ENCODE measurements at regions of chr22 and their contacts with region 1.

Region 1: GRCh38 chr22:42717197-42717928 is 3.3 kb downstream of the A4GALT start:
- DNase-seq: peak; percentile 72
- H3K4me3 ChIP-seq: peak overlapping the region; percentile 83
- H3K27ac ChIP-seq: peak overlapping the region; percentile 97
- H3K4me1 ChIP-seq: peaks cover 83% of the 10 kb centered on the region
- CTCF ChIP-seq: no peak

Region 2: DNA sequence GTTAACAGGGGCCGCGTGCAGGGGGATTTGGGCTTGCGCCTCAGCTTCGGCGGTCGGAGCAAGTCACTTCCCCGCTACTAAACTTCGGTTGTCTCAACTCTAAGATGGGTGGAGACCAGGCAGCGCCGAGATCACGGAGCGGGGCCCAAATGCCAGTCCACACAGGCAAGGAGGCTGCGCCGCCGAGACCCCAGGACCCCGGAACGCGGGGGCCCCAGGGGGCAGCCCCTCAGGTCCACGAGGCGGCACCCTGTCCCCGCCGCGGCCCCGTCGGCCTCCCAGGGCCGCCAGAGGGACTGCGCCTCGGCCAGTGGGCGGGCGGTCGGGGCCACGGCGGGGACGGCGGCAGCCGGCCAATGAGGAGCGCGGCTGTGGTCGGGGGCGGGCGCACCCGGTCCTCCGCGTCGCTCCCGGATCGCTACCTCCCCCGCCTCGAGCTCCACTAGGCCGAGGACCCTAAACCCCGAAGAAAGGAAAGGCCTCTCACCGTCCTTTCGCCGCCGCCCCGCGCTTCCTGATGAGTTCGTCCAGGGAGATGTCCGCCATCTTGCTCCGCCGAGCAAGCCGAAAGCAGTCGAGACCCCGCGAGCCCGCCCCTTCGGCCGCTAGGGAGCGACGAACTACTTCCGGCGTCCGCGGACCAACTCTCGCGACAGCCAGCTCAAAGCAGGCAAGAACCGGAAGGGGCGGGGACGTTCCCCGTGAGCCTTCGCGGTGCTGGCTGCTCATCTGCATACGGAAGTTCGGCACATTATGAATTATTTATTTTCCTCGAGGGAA is 102.9 kb before region 1 on chr22 and contains the start of gene POLDIP3:
- CTCF ChIA-PET with region 1: no interaction called
- POLR2A ChIA-PET with region 1: no interaction called
- intact Hi-C with region 1: loop called (anchors 2 kb)
- DNase-seq: peak; percentile 100
- H3K4me3 ChIP-seq: peak within 1 kb of the TSS; percentile 85
- H3K27ac ChIP-seq: peak within 1 kb of the TSS; percentile 92
- H3K4me1 ChIP-seq: peaks cover 34% of the 10 kb centered on the region
- CTCF ChIP-seq: peak; percentile 46
- total RNA-seq, gene POLDIP3: 52.7 and 70.7 TPM in 2 replicates

Region 3: DNA sequence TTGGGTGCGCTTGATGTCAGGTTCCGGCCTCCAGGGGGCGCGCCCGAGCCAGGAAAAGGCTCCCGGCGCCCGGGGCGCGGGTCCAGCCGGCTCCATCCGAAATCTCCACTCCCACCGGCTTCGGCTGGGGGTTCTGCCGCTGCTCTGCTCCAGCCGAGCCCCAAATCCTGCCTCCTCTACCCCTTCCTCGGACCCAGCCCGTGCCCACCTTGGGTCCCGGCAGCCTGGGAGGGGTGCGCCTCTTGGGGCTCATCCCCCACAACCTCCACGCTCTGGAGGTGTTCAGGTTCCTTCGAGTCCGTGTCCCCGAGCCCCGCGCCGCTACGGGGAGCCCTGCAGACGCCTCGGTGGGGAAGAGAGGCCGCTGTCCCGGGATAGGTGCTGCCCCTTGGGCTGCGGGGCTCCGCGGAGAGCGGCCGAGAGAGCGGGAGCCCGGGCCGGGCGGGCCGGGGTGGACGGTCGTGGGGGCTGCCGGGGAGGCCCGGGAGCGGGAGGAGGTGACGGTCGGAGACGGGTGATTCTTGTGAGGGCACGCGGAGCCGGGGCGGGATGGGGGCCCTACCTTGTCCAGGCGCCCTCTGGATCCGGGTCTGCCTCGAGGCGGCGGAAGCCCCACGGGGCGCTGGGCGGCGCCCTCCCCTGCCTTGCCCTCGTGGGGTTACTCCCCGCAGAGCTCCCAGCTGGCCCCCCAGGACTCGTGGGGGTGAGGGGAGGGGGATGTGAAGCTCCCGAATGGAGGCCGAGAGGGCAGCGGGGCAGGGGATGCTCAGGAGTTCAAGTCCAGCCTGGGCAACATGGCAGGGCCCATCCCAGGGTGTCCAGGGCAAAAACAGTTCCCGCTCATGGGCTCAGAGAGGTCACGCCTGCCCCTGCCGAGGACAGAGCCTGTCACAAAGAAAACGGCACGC is 55.0 kb before region 1 on chr22:
- CTCF ChIA-PET with region 1: no interaction called
- POLR2A ChIA-PET with region 1: interaction called, 4 read pairs
- intact Hi-C with region 1: loop called (anchors 1 kb)
- DNase-seq: peak; percentile 85
- H3K4me3 ChIP-seq: peak overlapping the region; percentile 64
- H3K27ac ChIP-seq: no peak overlapping the region
- H3K4me1 ChIP-seq: peaks cover 49% of the 10 kb centered on the region
- CTCF ChIP-seq: peak; percentile 91

Region 4: DNA sequence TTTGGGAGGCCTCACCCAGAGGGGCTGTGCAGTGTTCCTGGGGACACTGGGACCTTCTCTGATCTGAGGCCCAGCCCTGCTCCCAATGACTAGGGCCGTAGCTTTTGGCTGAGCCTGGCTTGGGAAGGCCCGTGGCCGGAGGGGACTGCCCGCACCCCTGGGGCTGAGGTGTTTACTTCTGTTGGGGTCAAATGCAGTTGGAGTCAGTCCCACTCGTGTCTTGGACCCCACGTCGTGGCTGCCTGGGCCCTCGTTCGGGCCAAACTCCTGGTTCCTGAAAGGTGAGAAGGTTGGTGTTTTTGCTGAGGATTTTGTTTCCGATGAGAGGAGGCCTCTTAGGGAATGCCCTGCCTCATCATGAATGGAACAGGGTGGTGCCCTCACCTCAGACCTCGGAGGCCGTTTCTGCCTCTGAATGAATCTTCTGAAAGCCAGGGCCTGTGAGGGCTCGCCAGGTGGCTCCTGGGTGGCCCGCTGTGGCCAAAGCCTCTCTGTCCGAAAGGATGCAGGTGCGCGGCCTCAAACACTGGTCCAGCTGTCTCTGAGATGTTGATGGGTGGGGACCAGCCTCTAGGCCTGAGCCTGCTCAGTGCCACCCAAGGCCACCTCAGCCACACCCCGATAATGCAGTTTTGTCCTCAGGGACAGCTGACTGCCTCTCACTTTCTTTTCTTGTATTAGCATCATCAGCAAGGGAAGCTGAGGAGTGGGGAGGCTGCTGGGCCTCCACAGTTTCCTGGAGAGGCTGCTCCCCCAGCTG is 43.6 kb after region 1 on chr22:
- CTCF ChIA-PET with region 1: interaction called, 3 read pairs
- POLR2A ChIA-PET with region 1: interaction called, 3 read pairs
- intact Hi-C with region 1: loop called (anchors 1 kb)
- DNase-seq: peak; percentile 95
- H3K4me3 ChIP-seq: peak overlapping the region; percentile 33
- H3K27ac ChIP-seq: peak overlapping the region; percentile 95
- H3K4me1 ChIP-seq: peaks cover 72% of the 10 kb centered on the region
- CTCF ChIP-seq: no peak

Region 5: DNA sequence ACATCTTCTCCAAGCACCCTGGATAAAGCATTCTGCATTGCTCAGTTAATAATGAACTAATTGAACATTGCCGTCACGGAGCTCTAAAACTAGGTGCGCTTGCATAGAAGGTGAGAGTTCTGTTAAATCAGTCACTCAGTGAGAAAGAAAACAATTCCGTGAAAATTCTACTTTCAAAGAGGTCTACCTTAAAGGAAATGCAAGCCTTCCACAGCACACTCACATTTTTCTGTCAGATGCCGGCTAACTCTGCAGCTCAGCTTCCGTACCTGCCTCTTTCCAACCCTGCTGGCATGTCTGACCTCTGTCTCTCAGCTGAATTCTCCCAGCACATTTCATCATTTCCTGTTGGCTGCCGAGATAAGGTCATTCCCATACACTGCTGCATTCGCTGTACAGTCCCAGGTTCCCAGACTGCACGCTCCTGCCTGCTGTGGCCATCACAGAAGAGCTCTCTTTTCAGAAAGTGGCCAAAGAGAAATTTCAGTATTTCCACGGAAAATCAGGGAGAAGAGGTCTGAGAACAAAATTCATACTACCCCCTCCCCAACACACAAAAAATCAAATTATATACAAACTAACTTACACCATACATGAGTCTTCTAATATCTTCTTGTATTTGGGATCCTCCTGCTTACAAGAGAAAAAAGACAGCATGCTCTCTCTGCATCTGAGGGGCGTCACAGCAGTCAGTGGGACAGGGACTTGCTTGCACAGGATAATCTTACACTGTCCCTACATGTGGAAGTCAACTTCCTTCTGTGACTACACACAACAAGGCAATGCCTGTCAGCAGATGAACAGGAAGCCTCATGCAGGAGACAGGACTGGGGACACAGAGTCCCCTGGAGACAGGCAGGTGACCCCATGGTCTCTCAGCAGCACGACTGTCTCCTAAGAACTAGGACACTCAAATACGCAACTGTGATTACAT is 242.5 kb after region 1 on chr22:
- CTCF ChIA-PET with region 1: no interaction called
- POLR2A ChIA-PET with region 1: no interaction called
- intact Hi-C with region 1: no loop called
- DNase-seq: no peak
- H3K4me3 ChIP-seq: no peak overlapping the region
- H3K27ac ChIP-seq: no peak overlapping the region
- H3K4me1 ChIP-seq: no peaks in the 10 kb centered on the region
- CTCF ChIP-seq: no peak

Region 6: GRCh38 chr22:43118953-43119458 is 401.6 kb after region 1 on chr22:
- CTCF ChIA-PET with region 1: no interaction called
- POLR2A ChIA-PET with region 1: no interaction called
- intact Hi-C with region 1: loop called (anchors 5 kb)
- DNase-seq: peak; percentile 97
- H3K4me3 ChIP-seq: peak overlapping the region; percentile 54
- H3K27ac ChIP-seq: peak overlapping the region; percentile 96
- H3K4me1 ChIP-seq: peaks cover 100% of the 10 kb centered on the region
- CTCF ChIP-seq: no peak